PC-9 (cell line): ENCODE measurements at regions of chr1 and their contacts with region 1.

Region 1: GRCh38 chr1:85544689-85545215 is 35.8 kb upstream of the CCN1 start:
- DNase-seq: peak; percentile 65 to 99
- H3K4me3 ChIP-seq: peak overlapping the region; percentile 14; the same call in 1 of the 2 replicates
- H3K27ac ChIP-seq: peak overlapping the region; percentile 75
- H3K4me1 ChIP-seq: peaks cover 57% of the 10 kb centered on the region
- H3K27me3 ChIP-seq: no peaks in the 10 kb centered on the region
- CTCF ChIP-seq: no peak

Region 2: DNA sequence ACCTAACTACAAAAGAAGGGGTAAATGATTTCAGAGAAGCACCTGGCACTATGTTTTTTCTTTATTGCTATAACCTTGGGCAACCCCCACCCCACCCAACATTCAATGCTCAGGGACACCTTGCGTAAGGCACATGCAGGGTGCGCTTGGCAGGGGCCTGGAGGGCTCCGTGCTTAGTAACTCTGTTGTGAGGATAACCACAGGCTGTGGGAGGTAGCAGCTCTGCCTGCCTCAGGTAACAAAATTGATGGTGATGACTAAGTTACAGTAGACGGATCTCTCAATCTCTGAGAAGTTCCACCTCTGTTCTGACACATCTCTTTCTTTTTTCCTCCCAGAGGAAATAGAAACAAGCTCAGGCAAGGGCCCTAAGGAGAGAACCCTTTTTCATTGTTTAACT is 27.1 kb after region 1 on chr1:
- CTCF ChIA-PET with region 1: no interaction called
- POLR2A ChIA-PET with region 1: interaction called, 10 read pairs
- intact Hi-C with region 1: no loop called
- DNase-seq: peak; percentile 66 to 96
- H3K4me3 ChIP-seq: 0 out of 2 replicates have a peak overlapping the region, but pooled peaks have one; percentile 7
- H3K27ac ChIP-seq: peak overlapping the region; percentile 71
- H3K4me1 ChIP-seq: peaks cover 65% of the 10 kb centered on the region
- H3K27me3 ChIP-seq: no peaks in the 10 kb centered on the region
- CTCF ChIP-seq: no peak